ENCODE measurements at regions of chr15 and their contacts with region 1.

Region 1: DNA sequence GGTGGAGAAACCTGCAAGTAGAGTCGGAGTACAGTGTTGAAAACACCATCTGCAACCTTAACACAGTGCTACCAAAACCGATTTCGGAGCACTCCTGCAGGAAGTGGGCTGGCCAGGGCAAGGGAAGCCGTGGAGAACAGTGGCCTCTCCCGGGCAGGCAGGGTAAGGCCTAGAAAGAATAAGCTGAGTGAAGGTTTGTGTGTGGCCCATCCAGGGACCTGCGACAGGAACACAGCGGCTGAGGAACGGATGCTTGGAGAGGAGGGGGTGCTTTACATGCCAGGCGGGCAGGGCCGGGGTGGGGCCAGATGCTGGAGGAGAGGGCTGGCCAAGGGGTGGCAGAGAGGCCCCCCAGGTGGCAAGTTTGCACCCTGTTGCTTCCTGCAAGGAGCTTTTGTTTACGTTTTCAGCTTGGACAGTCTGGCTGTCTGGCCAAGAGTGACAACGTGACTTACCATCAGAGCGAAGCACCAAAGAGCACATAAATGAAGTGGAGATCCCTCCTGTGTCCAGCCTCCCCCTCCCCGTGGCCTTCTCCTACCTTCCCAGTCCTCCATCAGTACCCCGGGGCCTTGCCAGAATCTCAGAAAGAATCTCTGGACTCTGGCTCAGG is 156.5 kb downstream of the PGPEP1L start:
- DNase-seq: peak; percentile 79
- ATAC-seq: peak; percentile 70
- H3K4me3 Mint-ChIP-seq: peak overlapping the region; percentile 95
- H3K27ac Mint-ChIP-seq: peak overlapping the region; percentile 96
- H3K4me1 Mint-ChIP-seq: peaks cover 81% of the 10 kb centered on the region
- H3K27me3 Mint-ChIP-seq: no peaks in the 10 kb centered on the region
- CTCF ChIP-seq: peak; percentile 36; the same call in 1 of the 2 replicates

Region 2: DNA sequence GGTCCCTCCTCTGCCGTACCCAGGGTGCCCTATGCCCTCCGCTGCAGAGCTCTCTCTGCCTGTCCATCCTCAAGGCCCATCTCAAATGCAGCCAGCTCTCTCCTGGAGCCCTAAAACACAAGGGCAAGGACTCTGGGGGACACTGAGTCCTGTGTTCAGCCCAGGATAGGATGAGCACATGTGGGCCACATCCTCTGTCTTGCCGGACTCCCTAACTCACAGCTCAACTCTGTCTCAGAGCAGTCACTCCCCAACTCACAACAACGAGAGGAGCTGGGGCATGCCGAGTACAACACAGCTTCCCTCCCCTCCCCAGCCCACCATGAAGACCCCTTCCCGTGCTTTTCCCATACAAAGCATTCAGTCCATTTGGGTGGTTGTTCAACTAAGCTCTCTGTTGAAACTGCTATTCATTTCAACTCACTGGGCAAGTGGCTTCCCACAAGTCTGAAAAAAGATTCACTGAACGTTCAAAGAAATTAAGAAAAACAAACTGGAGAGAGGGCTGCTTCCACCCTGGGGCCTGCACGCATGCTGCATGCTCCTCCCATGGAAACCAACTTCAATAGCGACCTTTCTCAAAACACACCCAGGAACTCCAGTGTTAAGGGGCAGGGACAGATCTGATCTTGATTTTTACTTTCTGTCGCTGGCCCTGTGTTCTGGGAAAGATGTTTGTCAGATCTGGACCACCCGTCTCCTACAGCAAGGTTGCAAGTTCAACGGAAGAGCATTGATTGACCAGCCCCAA is 327.0 kb before region 1 on chr15:
- CTCF ChIA-PET with region 1: interaction called, 14 read pairs
- POLR2A ChIA-PET with region 1: no interaction called
- DNase-seq: no peak
- ATAC-seq: no peak
- H3K4me3 Mint-ChIP-seq: no peak overlapping the region
- H3K27ac Mint-ChIP-seq: peak overlapping the region; percentile 67; the same call in 1 of the 2 replicates
- H3K4me1 Mint-ChIP-seq: peaks cover 21% of the 10 kb centered on the region
- H3K27me3 Mint-ChIP-seq: no peaks in the 10 kb centered on the region
- CTCF ChIP-seq: no peak

Region 3: GRCh38 chr15:98647774-98648653 is 203.1 kb before region 1 on chr15 and contains the start of gene IGF1R:
- CTCF ChIA-PET with region 1: interaction called, 11 read pairs
- POLR2A ChIA-PET with region 1: interaction called, 3 read pairs
- DNase-seq: peak; percentile 69
- ATAC-seq: peak; percentile 39
- H3K4me3 Mint-ChIP-seq: peak within 1 kb of the TSS; percentile 78
- H3K27ac Mint-ChIP-seq: peak within 1 kb of the TSS; percentile 93; the same call in 1 of the 2 replicates
- H3K4me1 Mint-ChIP-seq: peaks cover 28% of the 10 kb centered on the region
- H3K27me3 Mint-ChIP-seq: no peaks in the 10 kb centered on the region; the same call in 1 of the 2 replicates
- CTCF ChIP-seq: 0 out of 2 replicates have a peak, but pooled peaks have one; percentile 5
- total RNA-seq, gene IGF1R: 116 to 125 TPM (median 120 TPM) in 3 replicates

Region 4: GRCh38 chr15:98658831-98659699 is 192.0 kb before region 1 on chr15:
- CTCF ChIA-PET with region 1: interaction called, 10 read pairs
- POLR2A ChIA-PET with region 1: no interaction called
- DNase-seq: no peak
- ATAC-seq: peak; percentile 31
- H3K4me3 Mint-ChIP-seq: no peak overlapping the region
- H3K27ac Mint-ChIP-seq: peak overlapping the region; percentile 48
- H3K4me1 Mint-ChIP-seq: peaks cover 94% of the 10 kb centered on the region
- H3K27me3 Mint-ChIP-seq: no peaks in the 10 kb centered on the region
- CTCF ChIP-seq: peak; percentile 81

Region 5: GRCh38 chr15:98776607-98777315 is 74.3 kb before region 1 on chr15:
- CTCF ChIA-PET with region 1: interaction called, 15 read pairs
- POLR2A ChIA-PET with region 1: interaction called, 3 read pairs
- DNase-seq: no peak
- ATAC-seq: peak; percentile 10; the same call in 1 of the 2 replicates
- H3K4me3 Mint-ChIP-seq: no peak overlapping the region; the same call in 1 of the 2 replicates
- H3K27ac Mint-ChIP-seq: peak overlapping the region; percentile 71
- H3K4me1 Mint-ChIP-seq: peaks cover 70% of the 10 kb centered on the region
- H3K27me3 Mint-ChIP-seq: no peaks in the 10 kb centered on the region
- CTCF ChIP-seq: no peak

Region 6: DNA sequence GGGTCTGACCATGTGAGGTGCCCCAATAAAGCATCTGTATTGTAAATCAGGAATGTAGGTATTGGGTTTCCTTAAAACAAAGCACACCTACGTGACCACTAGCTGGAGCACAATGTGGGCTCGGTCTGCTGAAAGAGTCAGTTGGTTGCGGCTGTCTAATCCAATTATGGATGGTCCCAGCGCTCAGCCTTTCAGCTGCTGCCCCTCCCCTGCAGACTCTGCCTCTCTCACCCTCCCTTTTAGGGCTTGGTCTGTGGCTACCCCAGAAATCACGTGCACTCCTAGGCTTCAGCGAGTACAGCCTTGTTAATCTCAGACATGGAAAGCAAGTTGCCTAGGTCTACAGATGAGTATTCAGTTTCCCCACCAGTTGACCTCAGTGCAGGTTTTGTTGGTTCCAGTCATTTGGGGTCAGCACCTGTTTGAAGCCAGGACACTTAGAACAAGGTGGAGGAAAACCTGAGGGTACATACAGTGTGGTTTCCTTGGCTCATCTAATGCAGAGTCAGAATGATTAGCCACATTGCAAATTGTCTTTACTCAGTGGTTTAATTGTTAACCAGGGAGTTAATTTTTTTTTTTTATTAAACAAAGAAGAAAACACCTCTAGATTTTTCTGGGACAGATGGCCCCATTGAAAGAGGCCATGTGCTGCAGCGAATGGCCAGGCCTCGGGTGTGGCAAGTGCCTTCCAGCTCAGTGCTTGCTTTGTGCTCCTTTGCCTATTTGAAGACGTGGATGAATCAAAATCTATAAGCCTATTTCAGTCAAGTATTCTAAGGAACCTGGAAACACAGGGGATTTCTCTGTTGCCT is 65.1 kb before region 1 on chr15:
- CTCF ChIA-PET with region 1: interaction called, 16 read pairs
- POLR2A ChIA-PET with region 1: no interaction called
- DNase-seq: peak; percentile 50
- ATAC-seq: peak; percentile 84
- H3K4me3 Mint-ChIP-seq: peak overlapping the region; percentile 24
- H3K27ac Mint-ChIP-seq: peak overlapping the region; percentile 84
- H3K4me1 Mint-ChIP-seq: peaks cover 81% of the 10 kb centered on the region
- H3K27me3 Mint-ChIP-seq: no peaks in the 10 kb centered on the region
- CTCF ChIP-seq: no peak

Region 7: DNA sequence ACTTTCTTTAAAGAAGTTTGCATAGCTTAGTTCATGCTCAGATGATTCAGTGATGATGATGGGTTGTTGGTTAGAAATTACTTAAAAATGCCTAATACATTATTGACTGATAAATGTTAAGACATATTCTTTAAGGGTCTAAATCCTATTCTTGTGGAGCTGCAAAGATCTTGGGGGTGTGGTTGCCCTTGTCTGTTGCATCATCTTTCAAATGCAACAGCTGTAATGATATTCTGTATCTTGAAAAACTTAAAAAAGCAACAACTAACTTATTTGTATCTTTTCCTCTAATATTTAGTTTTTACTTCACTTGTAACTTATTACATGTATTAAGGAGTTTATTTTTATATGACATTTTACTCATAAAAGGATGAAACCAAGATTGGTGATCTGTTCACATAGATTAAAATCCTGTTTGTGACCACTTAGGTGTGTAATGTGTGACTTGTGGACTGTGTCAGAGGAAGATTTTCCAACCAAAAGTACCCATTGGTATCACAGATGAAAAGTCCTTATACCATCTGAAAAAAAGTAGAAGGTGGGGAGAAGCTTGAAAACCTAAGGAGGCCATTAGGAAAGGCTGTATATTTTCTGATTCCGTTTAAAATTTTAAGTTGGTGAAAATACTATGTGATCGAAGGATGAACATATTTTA is 59.9 kb before region 1 on chr15:
- CTCF ChIA-PET with region 1: interaction called, 16 read pairs
- POLR2A ChIA-PET with region 1: no interaction called
- DNase-seq: no peak
- ATAC-seq: no peak
- H3K4me3 Mint-ChIP-seq: no peak overlapping the region
- H3K27ac Mint-ChIP-seq: 0 out of 2 replicates have a peak overlapping the region, but pooled peaks have one; percentile 1
- H3K4me1 Mint-ChIP-seq: peaks cover 97% of the 10 kb centered on the region
- H3K27me3 Mint-ChIP-seq: no peaks in the 10 kb centered on the region
- CTCF ChIP-seq: no peak

Region 8: DNA sequence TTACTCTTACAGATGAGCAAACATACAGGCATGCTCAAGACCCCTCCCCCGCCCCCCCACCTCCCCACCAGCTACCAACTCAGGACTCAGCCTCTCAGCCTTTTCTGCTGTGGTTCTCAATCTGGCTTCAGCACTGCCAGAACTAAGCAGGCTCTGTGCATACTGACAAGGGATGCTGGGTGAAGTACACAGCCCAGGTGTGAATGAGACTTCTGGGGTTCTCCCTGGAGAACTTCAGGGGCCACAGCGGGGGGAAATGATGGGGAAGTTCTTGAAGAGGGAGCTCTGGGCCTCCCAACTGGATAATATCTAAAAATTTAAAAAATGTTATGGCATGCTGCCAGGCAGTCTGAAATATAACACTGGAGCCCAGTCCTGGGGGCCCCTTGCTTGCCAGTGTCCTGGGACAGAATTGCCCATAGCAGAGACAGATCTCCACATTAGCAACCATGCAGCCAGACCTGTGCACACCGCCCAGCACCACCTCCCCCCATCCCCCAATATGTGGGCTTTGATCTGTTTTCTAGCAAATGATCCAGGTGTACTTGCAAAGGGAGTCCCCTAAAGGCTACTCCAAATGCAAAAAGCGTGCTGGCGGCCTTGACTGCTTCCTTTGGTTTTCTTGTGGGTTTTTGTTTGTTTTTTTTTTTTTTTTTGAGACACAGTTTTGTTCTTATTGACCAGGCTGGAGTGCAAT is 115.2 kb after region 1 on chr15:
- CTCF ChIA-PET with region 1: no interaction called
- POLR2A ChIA-PET with region 1: no interaction called
- DNase-seq: no peak
- ATAC-seq: peak; percentile 43
- H3K4me3 Mint-ChIP-seq: no peak overlapping the region
- H3K27ac Mint-ChIP-seq: no peak overlapping the region
- H3K4me1 Mint-ChIP-seq: 0 out of 2 replicates have a peak, but pooled peaks cover 3% of the 10 kb centered on the region
- H3K27me3 Mint-ChIP-seq: no peaks in the 10 kb centered on the region
- CTCF ChIP-seq: no peak

Region 9: DNA sequence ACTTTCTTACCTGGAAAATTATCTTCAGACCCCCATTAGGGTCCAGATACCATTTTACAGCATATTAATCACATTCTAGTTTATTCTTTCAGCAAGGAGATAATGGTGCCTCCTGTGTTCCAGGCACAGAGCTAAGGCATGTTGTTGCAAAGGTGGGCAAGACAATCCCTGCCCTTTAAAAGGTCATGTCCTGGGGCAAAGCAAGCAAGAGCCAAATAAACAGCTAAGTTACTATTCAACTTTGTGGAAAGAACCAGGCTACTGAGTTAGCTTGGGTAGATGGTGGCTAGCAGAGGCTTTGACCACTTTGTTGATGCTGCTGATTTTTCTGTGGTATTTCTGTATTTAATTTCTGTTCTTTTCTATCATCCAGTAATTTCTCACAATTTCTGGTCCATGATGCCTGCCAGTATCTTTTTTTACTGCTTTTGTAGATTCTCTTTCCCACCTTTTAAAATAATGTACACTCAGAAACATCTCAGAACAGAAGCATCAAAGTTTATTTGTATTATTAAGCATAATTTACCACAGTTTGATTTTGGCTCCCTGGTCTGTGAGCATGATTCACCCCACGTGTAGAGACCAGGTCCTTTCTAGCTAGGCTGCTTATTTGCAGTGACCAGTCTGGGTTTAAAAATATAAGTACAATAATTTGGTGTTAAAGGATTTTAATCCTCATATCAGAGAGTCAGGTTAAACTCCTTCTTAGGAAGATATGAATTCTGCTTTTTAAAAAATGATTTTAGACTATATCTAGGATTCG is 471.8 kb after region 1 on chr15:
- CTCF ChIA-PET with region 1: no interaction called
- POLR2A ChIA-PET with region 1: no interaction called
- DNase-seq: no peak
- ATAC-seq: no peak
- H3K4me3 Mint-ChIP-seq: no peak overlapping the region
- H3K27ac Mint-ChIP-seq: no peak overlapping the region
- H3K4me1 Mint-ChIP-seq: peaks cover under 1% of the 10 kb centered on the region
- H3K27me3 Mint-ChIP-seq: no peaks in the 10 kb centered on the region
- CTCF ChIP-seq: no peak